Endothelial cell of umbilical vein (primary cell): ENCODE measurements at regions of chr3 and their contacts with region 1.

Region 1: DNA sequence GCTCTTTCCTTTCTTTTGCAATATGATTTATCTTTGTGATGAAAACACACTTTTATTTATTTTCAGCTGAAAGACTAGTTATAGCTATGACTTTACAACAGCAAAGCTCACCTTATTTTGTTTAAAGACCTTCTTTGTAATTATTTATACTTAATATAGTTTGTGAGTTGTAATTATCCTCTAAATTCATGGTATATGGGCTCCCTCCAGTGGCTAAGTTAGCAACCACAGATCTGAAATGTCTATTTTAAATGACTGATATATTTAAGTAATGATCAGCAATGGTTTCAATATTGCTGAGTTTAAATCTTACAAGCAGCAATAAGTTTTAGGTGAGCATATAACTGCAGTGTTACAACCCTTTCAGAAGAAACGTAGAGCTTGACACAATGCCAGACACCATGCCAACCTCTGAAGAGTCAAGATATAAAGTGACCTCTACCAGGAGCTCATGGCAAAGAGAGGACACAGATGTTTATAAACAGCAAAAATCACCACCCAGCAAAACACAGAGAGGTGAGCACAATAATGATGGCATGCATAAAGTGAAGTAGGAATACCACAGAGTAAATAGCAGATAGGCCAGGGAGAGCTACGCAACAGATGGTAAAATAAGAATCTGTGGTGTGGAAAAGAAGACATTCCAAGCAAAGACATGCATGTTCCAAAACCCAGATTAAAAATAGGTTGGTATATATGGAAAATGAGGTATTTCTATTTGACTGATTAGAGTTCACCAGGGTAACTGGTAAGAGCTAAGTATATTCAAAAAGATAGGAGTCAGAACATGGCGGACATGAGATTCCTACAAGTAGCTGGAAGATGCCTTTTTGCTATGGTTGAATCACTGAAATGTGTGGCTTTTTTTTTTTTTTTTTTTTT is 143.7 kb upstream of the ZNF385D start:
- DNase-seq: peak; percentile 17
- H3K4me3 ChIP-seq: no peak overlapping the region
- H3K27ac ChIP-seq: no peak overlapping the region
- H3K4me1 ChIP-seq: no peaks in the 10 kb centered on the region
- H3K27me3 ChIP-seq: no peaks in the 10 kb centered on the region
- CTCF ChIP-seq: peak in 1 of 2 donors; percentile 10
- POLR2A ChIP-seq: no peak

Region 2: DNA sequence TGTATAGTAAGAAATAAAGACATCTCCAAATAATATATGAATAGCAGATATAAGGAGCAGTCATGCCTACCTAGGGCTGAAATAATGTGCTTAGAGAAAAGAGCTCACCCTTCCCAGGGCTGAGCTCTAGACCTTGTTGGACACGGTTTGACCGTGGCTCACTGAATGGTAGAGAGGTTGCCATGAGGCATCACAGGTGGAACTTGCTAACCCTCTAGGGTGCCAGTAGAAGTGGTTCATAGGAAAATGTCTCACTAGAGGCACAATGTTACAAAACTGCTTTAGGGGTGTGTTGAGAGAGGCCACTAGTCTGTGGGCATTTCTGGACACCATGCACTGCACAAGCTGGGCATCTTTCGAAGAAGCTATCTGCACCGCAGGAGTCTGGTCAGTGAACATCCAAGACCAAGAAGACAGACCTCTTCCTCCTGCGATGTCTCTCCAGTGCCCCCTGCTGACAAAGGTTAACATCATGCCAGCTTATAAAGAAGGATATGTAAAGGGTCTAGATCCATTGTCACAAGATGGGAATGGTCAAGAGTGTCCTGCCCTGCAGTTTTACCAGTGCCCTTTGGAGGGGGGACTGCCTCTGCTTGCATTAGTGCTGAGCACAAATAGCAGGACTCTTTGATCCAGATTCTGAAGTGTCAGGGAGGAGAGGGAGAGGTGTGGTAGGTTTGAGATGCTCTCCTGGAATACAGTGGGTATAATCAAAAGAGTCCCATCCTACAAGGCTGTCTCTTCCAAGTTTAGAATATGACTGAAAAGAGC is 410.5 kb before region 1 on chr3:
- CTCF ChIA-PET with region 1: no interaction called
- POLR2A ChIA-PET with region 1: no interaction called
- dilution Hi-C with region 1: no loop called
- intact Hi-C with region 1: loop called (anchors 1 kb)
- DNase-seq: peak; percentile 61
- H3K4me3 ChIP-seq: no peak overlapping the region
- H3K27ac ChIP-seq: no peak overlapping the region
- H3K4me1 ChIP-seq: no peaks in the 10 kb centered on the region
- H3K27me3 ChIP-seq: no peaks in the 10 kb centered on the region
- CTCF ChIP-seq: peak; percentile 55 to 61
- POLR2A ChIP-seq: no peak

Region 3: GRCh38 chr3:21752749-21753347 is 141.9 kb before region 1 on chr3:
- CTCF ChIA-PET with region 1: interaction called, 6 read pairs
- POLR2A ChIA-PET with region 1: no interaction called
- dilution Hi-C with region 1: no loop called
- intact Hi-C with region 1: loop called (anchors 1 kb)
- DNase-seq: peak; percentile 9
- H3K4me3 ChIP-seq: no peak overlapping the region
- H3K27ac ChIP-seq: no peak overlapping the region
- H3K4me1 ChIP-seq: no peaks in the 10 kb centered on the region
- H3K27me3 ChIP-seq: peaks cover 0 to 17% of the 10 kb centered on the region in 2 experiments
- CTCF ChIP-seq: peak in 1 of 2 donors; percentile 25
- POLR2A ChIP-seq: no peak

Region 4: GRCh38 chr3:21847005-21847404 is 47.7 kb before region 1 on chr3:
- CTCF ChIA-PET with region 1: no interaction called
- POLR2A ChIA-PET with region 1: no interaction called
- dilution Hi-C with region 1: no loop called
- intact Hi-C with region 1: no loop called
- DNase-seq: no peak
- H3K4me3 ChIP-seq: no peak overlapping the region
- H3K27ac ChIP-seq: no peak overlapping the region
- H3K4me1 ChIP-seq: no peaks in the 10 kb centered on the region
- H3K27me3 ChIP-seq: no peaks in the 10 kb centered on the region
- CTCF ChIP-seq: no peak
- POLR2A ChIP-seq: no peak

Region 5: GRCh38 chr3:21919383-21919782 is 24.7 kb after region 1 on chr3:
- CTCF ChIA-PET with region 1: no interaction called
- POLR2A ChIA-PET with region 1: no interaction called
- dilution Hi-C with region 1: no loop called
- intact Hi-C with region 1: loop called (anchors 1 kb)
- DNase-seq: no peak
- H3K4me3 ChIP-seq: no peak overlapping the region
- H3K27ac ChIP-seq: no peak overlapping the region
- H3K4me1 ChIP-seq: no peaks in the 10 kb centered on the region
- H3K27me3 ChIP-seq: no peaks in the 10 kb centered on the region
- CTCF ChIP-seq: no peak
- POLR2A ChIP-seq: no peak

Region 6: DNA sequence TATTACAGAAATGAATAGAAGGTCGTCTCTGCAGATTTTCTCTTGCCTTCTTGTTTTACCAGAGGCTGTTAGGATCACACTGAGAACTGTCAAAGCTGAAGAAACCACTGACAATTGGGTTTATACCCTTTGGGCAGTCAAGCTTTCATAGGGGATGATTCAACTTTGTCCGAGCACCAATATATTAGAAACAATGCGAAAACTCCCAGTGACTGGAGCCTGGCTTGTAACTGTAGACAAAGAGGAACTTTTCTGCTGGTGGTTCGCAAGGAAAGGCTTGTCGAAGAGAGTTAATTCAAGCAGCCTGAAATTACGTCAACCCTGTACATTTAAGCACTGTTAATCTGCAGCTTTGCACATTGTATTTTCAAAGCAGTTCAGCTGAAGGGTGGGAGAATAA is 49.6 kb after region 1 on chr3:
- CTCF ChIA-PET with region 1: no interaction called
- POLR2A ChIA-PET with region 1: no interaction called
- dilution Hi-C with region 1: no loop called
- intact Hi-C with region 1: no loop called
- DNase-seq: no peak
- H3K4me3 ChIP-seq: no peak overlapping the region
- H3K27ac ChIP-seq: no peak overlapping the region
- H3K4me1 ChIP-seq: no peaks in the 10 kb centered on the region
- H3K27me3 ChIP-seq: no peaks in the 10 kb centered on the region
- CTCF ChIP-seq: no peak
- POLR2A ChIP-seq: no peak

Region 7: DNA sequence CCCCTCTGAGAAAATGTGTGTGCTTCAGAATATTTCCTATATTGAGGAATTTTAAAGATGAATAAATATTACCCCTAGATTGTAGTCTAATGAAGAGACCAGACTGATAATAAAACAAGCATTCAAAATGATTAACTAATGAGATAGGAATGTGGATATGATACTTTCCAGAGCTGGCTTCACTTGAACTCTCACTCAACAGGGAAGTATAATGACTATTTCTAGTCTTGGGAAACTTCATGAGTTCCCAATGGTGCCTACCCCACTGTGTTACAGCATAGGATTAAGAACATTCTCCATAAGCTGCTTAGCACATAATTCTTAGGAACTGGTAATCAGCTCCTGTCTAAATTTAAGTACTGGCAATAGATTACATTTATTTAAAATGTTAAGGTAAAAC is 117.8 kb after region 1 on chr3:
- CTCF ChIA-PET with region 1: no interaction called
- POLR2A ChIA-PET with region 1: no interaction called
- dilution Hi-C with region 1: no loop called
- intact Hi-C with region 1: no loop called
- DNase-seq: no peak
- H3K4me3 ChIP-seq: no peak overlapping the region
- H3K27ac ChIP-seq: no peak overlapping the region
- H3K4me1 ChIP-seq: no peaks in the 10 kb centered on the region
- H3K27me3 ChIP-seq: no peaks in the 10 kb centered on the region
- CTCF ChIP-seq: no peak
- POLR2A ChIP-seq: no peak

Region 8: DNA sequence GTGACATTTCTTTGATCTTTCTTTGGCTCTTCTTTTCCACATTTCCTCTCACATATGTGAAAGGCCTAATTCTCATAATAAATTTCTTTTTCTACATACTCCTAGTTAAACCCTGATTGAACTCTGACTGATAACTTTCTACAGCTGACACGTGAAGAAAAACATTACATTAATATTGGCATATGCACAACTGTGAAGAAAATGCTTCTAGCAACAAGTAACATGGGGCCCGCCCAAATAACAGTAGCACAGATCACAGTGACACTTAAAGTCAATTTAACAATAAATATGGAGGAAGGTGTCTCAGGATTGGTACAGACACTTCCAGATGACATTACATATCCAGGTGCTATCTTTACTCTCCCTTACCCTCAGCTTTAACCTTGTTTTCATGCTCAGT is 173.9 kb after region 1 on chr3:
- CTCF ChIA-PET with region 1: no interaction called
- POLR2A ChIA-PET with region 1: no interaction called
- dilution Hi-C with region 1: no loop called
- intact Hi-C with region 1: no loop called
- DNase-seq: no peak
- H3K4me3 ChIP-seq: no peak overlapping the region
- H3K27ac ChIP-seq: no peak overlapping the region
- H3K4me1 ChIP-seq: no peaks in the 10 kb centered on the region
- H3K27me3 ChIP-seq: no peaks in the 10 kb centered on the region
- CTCF ChIP-seq: no peak
- POLR2A ChIP-seq: no peak